ENCODE measurements at regions of chr12 and their contacts with region 1.

Region 1: GRCh38 chr12:123995023-123995748 is 22.2 kb downstream of the ZNF664 start:
- DNase-seq: no peak
- H3K4me3 ChIP-seq: no peak overlapping the region
- H3K27ac ChIP-seq: no peak overlapping the region
- H3K4me1 ChIP-seq: peaks cover 0 to 9% (median 5%) of the 10 kb centered on the region in 4 experiments
- H3K27me3 ChIP-seq: no peaks in the 10 kb centered on the region

Region 2: DNA sequence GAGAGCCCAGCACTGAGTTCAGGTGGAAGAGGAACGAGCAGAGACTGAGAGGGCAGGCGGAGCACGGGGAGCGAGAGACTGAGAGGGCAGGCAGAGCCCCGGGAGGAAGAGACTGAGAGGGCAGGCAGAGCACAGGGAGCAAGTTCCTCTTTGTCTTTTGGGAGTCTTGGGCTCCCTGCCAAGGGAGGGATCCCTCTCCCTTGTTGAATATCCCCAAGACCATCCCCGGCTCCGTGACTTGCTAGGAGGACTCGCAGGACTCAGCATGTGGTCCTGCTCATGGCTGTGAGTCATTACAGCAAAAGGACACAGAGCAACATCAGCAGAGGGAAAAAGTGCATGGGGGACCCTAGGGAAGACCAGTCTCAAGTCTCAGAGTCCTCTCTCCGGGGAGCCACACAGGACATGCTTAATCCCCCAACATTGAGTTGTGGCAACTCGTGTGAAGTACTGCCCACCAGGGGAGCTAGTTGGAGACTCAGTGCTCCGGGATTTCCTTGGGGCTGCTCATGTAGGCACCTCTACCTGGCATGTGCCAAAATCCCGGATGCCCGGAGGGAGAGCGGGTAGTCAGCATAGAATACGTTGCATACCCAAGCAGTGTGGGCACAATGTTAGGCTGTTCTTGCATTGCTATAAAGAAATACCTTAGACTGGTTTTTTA is 103.5 kb before region 1 on chr12:
- CTCF ChIA-PET with region 1: no interaction called
- POLR2A ChIA-PET with region 1: no interaction called
- DNase-seq: no peak
- H3K4me3 ChIP-seq: no peak overlapping the region
- H3K27ac ChIP-seq: no peak overlapping the region
- H3K4me1 ChIP-seq: peaks cover 0 to 4% (median 0%) of the 10 kb centered on the region in 4 experiments
- H3K27me3 ChIP-seq: peaks cover 0 to 2% (median 0%) of the 10 kb centered on the region in 5 experiments

Region 3: DNA sequence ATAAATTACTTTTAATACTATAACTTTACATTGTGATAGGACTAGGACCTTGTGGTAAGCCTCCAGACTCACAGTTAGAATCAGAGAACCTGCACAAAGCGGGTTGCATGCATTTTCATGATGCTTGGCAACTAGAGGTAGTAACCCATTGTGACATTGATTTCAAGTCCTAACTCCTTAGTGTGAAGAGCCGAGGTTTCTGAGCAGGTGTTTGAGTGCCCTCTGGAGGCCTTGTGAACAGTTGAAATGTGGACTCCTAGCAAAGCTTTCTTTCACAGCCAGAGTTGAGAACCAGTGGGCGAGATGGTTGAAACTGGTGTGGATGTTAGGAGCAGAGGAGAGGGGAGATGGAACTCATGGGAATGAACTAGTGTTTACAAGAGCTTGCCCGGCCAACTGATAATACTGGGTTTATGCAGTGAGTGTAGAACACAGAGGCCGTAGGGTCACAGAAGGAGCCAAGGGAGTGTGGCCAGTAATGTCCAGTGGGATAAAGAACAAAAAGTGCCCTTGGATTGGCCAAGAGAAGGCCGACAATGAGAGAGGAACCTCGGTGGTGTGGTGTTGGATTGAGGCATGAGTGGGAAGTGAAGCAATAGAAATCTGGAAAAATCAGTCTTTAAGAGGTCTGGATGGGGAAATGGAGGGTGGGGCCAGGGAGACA is 11.2 kb before region 1 on chr12:
- CTCF ChIA-PET with region 1: interaction called, 43 read pairs
- POLR2A ChIA-PET with region 1: no interaction called
- DNase-seq: peak; percentile 68 to 87 (median 84)
- H3K4me3 ChIP-seq: no peak overlapping the region
- H3K27ac ChIP-seq: no peak overlapping the region
- H3K4me1 ChIP-seq: no peaks in the 10 kb centered on the region
- H3K27me3 ChIP-seq: no peaks in the 10 kb centered on the region